PC-9 (cell line): ENCODE measurements at regions of chr5 and their contacts with region 1.

Region 1: DNA sequence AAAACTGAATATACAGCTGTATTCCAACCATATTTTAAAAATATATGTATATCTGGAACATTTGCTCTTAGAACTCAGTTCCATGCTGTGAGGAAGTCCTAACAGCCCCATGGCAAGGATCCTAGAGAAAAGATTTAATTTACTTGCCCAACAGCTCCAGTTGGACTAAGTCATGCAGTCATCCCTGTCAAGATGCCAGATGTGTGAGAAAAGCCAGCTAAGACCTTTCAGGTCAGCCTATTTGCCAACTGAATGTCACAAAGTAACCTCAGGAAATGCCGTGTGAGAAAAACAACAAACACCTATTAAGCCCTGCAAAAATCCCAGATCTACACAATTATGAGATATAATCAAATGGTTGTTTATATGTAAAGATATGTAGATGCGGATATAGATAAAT is 416.3 kb downstream of the NR2F1-AS1 start:
- DNase-seq: peak; percentile 29 to 66
- H3K4me3 ChIP-seq: no peak overlapping the region
- H3K27ac ChIP-seq: peak overlapping the region; percentile 98
- H3K4me1 ChIP-seq: peaks cover 53% of the 10 kb centered on the region
- H3K27me3 ChIP-seq: no peaks in the 10 kb centered on the region
- CTCF ChIP-seq: no peak

Region 2: DNA sequence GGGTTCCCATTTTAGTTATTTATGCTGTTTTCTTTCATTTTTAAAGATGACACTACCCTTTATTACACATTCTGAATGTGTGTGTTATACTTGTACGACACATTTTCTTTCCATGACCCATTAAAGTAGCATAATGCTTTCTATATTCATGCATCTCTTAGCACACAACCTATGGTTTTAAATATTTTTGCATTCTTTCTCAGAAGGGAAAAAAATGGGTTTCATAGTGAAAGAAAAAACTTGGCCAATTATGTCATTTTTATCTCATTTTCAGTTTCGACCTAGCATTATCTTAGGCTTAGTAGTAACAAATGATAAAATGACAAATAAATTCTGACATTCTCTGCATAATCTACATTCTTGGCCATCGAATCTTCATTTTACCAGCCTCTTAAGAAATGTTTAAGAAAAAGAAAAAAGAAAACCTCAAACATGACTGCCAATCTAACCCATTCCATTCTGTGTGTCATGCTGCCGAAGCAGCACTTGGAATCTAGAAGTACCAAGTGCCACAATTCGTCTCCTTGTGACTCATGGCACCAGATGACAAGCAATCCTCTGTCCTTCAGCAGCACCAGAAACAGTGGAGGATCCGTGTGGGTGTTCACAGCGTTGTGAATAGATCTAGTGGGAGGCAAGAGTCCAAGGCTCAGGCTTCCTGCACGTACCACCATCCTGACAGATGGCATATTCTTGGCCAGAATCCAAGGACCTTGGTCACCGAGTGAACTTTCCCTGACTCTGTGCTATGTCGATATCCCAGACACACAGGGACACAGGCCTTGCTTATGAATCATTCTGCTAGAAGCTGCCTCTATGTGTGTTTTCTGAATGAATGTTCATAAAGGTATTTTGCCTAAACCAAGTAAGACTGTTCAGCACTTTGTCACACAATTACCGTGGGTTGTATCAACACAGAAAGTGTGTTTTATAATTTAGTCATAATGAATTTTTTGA is 86.3 kb before region 1 on chr5:
- CTCF ChIA-PET with region 1: no interaction called
- POLR2A ChIA-PET with region 1: no interaction called
- intact Hi-C with region 1: loop called (anchors 1 kb)
- DNase-seq: peak; percentile 81 to 99
- H3K4me3 ChIP-seq: peak overlapping the region; percentile 43; the same call in 1 of the 2 replicates
- H3K27ac ChIP-seq: peak overlapping the region; percentile 94
- H3K4me1 ChIP-seq: peaks cover 35% of the 10 kb centered on the region
- H3K27me3 ChIP-seq: no peaks in the 10 kb centered on the region
- CTCF ChIP-seq: no peak

Region 3: GRCh38 chr5:93299681-93300308 is 135.1 kb after region 1 on chr5:
- CTCF ChIA-PET with region 1: no interaction called
- POLR2A ChIA-PET with region 1: no interaction called
- intact Hi-C with region 1: loop called (anchors 10 kb)
- DNase-seq: no peak
- H3K4me3 ChIP-seq: no peak overlapping the region
- H3K27ac ChIP-seq: no peak overlapping the region
- H3K4me1 ChIP-seq: peaks cover 16% of the 10 kb centered on the region
- H3K27me3 ChIP-seq: no peaks in the 10 kb centered on the region
- CTCF ChIP-seq: no peak